Endothelial cell of umbilical vein (primary cell): ENCODE measurements at regions of chr15 and their contacts with region 1.

Region 1: GRCh38 chr15:58749532-58750337 is at the start of gene ADAM10:
- DNase-seq: peak; percentile 99
- H3K4me3 ChIP-seq: peak within 1 kb of the TSS; percentile 77 to 93 (median 92)
- H3K27ac ChIP-seq: peak within 1 kb of the TSS; percentile 90
- H3K4me1 ChIP-seq: peaks cover 24% of the 10 kb centered on the region
- H3K27me3 ChIP-seq: no peaks in the 10 kb centered on the region
- CTCF ChIP-seq: no peak
- POLR2A ChIP-seq: peak; percentile 71
- total RNA-seq, gene ADAM10: 185 and 203 TPM in 2 replicates

Region 2: GRCh38 chr15:58269455-58270414 is 480.0 kb before region 1 on chr15:
- CTCF ChIA-PET with region 1: interaction called, 10 read pairs
- POLR2A ChIA-PET with region 1: no interaction called
- dilution Hi-C with region 1: no loop called
- intact Hi-C with region 1: loop called (anchors 2 kb)
- DNase-seq: peak; percentile 56
- H3K4me3 ChIP-seq: no peak overlapping the region
- H3K27ac ChIP-seq: no peak overlapping the region
- H3K4me1 ChIP-seq: no peaks in the 10 kb centered on the region
- H3K27me3 ChIP-seq: peaks cover 0 to under 1% of the 10 kb centered on the region in 2 experiments
- CTCF ChIP-seq: peak; percentile 48 to 60
- POLR2A ChIP-seq: no peak

Region 3: GRCh38 chr15:58331903-58332675 is 417.6 kb before region 1 on chr15:
- CTCF ChIA-PET with region 1: no interaction called
- POLR2A ChIA-PET with region 1: no interaction called
- dilution Hi-C with region 1: no loop called
- intact Hi-C with region 1: loop called (anchors 1 kb)
- DNase-seq: peak; percentile 93
- H3K4me3 ChIP-seq: no peak overlapping the region
- H3K27ac ChIP-seq: peak overlapping the region; percentile 76
- H3K4me1 ChIP-seq: peaks cover 18% of the 10 kb centered on the region
- H3K27me3 ChIP-seq: no peaks in the 10 kb centered on the region
- CTCF ChIP-seq: no peak
- POLR2A ChIP-seq: peak; percentile 38

Region 4: DNA sequence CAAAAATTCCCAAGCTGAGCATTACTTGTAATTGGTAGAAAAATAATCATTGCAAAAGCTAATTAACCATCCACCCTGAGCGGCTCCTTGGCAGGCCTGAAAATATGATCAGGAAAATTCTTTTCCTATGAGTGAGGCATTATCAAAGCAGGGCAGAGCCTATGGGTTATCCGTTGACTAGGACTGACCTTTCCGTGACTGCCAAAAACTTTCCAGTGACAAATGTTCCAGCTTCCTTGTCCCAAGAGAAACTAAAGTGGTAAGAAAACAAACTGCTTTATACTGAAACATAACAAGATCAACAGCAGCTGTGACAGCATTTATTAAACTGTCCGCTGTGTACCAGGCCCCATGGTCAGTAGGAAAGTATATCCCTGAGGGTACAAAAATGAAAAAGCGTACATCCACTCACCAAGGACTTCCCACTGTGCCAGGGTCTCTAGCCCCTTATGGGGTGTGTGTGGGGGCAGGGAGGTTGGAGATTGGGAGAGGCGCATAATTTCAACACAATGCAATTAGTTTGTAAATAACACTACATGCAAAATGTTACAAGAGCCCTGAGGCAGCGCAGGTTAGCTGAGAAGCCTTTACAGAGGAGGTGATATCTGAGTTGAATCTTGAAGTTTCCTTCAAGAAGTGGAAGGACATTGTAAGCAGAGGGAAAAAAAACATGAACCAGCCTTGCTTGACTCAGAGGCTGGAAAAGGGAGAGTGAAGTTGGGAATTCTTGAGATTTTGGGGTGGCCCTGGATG is 309.4 kb before region 1 on chr15:
- CTCF ChIA-PET with region 1: no interaction called
- POLR2A ChIA-PET with region 1: no interaction called
- dilution Hi-C with region 1: no loop called
- intact Hi-C with region 1: loop called (anchors 2 kb)
- DNase-seq: peak; percentile 90
- H3K4me3 ChIP-seq: no peak overlapping the region
- H3K27ac ChIP-seq: peak overlapping the region; percentile 82
- H3K4me1 ChIP-seq: peaks cover 32% of the 10 kb centered on the region
- H3K27me3 ChIP-seq: no peaks in the 10 kb centered on the region
- CTCF ChIP-seq: no peak
- POLR2A ChIP-seq: peak; percentile 34

Region 5: GRCh38 chr15:58666957-58667356 is 82.8 kb before region 1 on chr15:
- CTCF ChIA-PET with region 1: no interaction called
- POLR2A ChIA-PET with region 1: no interaction called
- dilution Hi-C with region 1: no loop called
- intact Hi-C with region 1: loop called (anchors 5 kb)
- DNase-seq: peak; percentile 28
- H3K4me3 ChIP-seq: no peak overlapping the region
- H3K27ac ChIP-seq: no peak overlapping the region
- H3K4me1 ChIP-seq: peaks cover 3% of the 10 kb centered on the region
- H3K27me3 ChIP-seq: no peaks in the 10 kb centered on the region
- CTCF ChIP-seq: no peak
- POLR2A ChIP-seq: no peak